CD14-positive monocyte (primary cell): ENCODE measurements at regions of chr4 and their contacts with region 1.

Region 1: DNA sequence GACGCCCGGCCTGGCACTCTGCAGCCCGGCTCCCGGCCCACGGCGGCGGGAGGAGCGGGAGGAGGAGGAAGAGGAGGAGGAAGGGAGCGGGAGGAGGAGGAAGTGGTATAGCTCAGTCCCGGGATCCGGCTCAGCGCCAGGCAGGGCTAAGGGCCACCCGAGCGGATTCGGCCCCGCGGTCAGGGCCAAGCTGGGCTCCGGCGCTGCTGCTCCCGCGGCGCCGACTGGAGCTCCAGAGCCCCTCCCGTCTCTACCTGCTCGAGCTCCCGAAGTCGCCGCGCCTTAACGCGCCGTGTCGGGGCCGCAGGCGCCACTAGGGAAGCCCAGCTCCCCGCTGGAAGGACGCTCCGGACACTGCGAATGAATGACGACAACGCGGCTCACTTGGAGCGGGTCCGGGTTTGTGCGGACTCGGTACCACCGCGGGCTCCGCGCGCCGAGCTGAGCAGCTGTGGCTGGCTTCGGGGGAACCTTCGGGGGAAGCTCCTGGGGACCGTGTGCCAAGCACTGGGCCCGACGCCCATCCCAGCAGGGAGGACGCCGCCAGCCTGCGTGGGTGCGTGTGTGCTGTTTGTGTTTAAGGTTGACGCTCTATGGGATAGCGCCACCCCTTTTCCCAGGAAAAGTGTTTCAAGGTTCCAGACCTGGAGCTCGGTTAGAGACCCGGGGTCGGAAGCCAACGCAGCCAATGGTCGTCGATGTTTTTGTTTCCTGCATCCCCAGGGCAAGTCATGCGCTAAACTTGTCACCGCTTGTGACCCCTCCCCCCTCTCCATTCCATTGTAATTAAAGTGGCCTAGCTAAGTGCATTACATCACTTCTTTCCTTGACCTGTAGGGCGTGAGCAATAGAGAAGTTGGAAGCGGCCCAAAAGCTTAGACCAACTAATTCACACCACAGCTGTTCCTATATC is at the start of gene TBC1D9:
- DNase-seq: peak; percentile 96 to 97 (median 96)
- H3K4me3 ChIP-seq: peak within 1 kb of the TSS; percentile 75 to 85 (median 79)
- H3K4me3 Mint-ChIP-seq: peak within 1 kb of the TSS; percentile 84 to 94
- H3K27ac ChIP-seq: peak within 1 kb of the TSS; percentile 95 to 98
- H3K27ac Mint-ChIP-seq: peak within 1 kb of the TSS; percentile 94 to 98 (median 97)
- H3K4me1 ChIP-seq: peaks cover 36 to 47% of the 10 kb centered on the region in 2 donors
- H3K4me1 Mint-ChIP-seq: peaks cover 42% of the 10 kb centered on the region
- H3K27me3 ChIP-seq: peaks cover 2 to 9% of the 10 kb centered on the region in 2 donors
- H3K27me3 Mint-ChIP-seq: peaks cover 12 to 20% (median 15%) of the 10 kb centered on the region in 3 donors
- CTCF ChIP-seq: no peak
- polyA plus RNA-seq, gene TBC1D9: 13.6 to 33.5 (median 21.0) TPM

Region 2: DNA sequence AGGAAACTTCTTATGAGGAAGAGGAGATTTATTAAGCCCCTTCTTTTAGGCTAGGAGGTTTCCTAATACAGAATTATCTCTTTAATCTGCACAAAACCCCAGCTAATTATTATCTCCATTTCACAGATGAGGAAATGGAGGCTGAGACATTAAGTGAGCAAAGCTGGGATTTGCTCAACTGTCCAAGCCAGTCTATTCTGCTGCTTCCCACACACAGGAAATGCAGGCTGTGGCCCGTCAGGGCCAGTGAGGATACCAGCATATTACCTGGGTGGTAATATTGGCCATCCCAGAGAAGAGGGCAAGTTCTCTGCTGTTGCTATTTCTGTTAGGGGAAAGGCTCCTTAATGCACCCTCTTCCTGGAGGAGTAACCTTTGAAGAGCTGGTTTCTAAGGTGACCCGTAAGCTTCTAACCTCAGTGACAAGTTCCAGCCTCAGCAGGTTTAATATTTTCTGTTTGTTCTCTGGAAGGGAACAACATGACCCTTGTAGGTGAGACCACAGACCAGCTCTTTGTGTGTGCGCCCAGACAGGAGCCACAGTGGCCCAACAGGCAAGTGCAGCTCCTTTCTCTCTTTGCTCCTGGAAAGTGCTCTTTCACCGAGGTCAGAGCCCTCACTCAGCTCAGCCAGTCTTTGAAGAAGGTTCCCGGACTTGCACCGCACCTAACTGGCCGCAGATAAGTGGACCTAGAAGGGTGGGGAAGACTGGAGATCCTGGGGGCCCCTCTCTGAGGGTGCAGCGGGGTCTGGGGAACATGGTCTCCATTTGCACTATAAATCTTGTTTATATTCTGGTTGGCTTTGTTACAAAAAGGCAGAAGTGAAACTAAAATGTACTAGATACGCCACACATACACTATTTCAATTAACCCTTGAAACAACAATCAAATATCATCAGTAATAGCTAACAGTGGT is 35.9 kb before region 1 on chr4:
- intact Hi-C with region 1: loop called in 1 of 2 experiments (anchors 5 kb)
- DNase-seq: peak in 2 of 3 donors; percentile 27 to 42
- H3K4me3 ChIP-seq: peak overlapping the region; percentile 9 to 69 (median 23)
- H3K4me3 Mint-ChIP-seq: peak overlapping the region; percentile 70 to 86
- H3K27ac ChIP-seq: peak overlapping the region; percentile 93 to 97
- H3K27ac Mint-ChIP-seq: peak overlapping the region; percentile 95 to 99 (median 97)
- H3K4me1 ChIP-seq: peaks cover 55 to 73% of the 10 kb centered on the region in 2 donors
- H3K4me1 Mint-ChIP-seq: peaks cover 70% of the 10 kb centered on the region
- H3K27me3 ChIP-seq: no peaks in the 10 kb centered on the region
- H3K27me3 Mint-ChIP-seq: no peaks in the 10 kb centered on the region
- CTCF ChIP-seq: no peak

Region 3: GRCh38 chr4:140743194-140743931 is 13.2 kb before region 1 on chr4:
- intact Hi-C with region 1: loop called in 1 of 2 experiments (anchors 2 kb)
- DNase-seq: peak; percentile 63 to 79 (median 71)
- H3K4me3 ChIP-seq: peak overlapping the region in 1 of 3 experiments; percentile 34
- H3K4me3 Mint-ChIP-seq: peak overlapping the region in 1 of 2 donors; percentile 83
- H3K27ac ChIP-seq: peak overlapping the region; percentile 5 to 84
- H3K27ac Mint-ChIP-seq: peak overlapping the region; percentile 85 to 97 (median 96)
- H3K4me1 ChIP-seq: peaks cover 20 to 25% of the 10 kb centered on the region in 2 donors
- H3K4me1 Mint-ChIP-seq: peaks cover 33% of the 10 kb centered on the region
- H3K27me3 ChIP-seq: no peaks in the 10 kb centered on the region
- H3K27me3 Mint-ChIP-seq: peaks cover 4 to 5% (median 5%) of the 10 kb centered on the region in 3 donors
- CTCF ChIP-seq: peak; percentile 32

Region 4: GRCh38 chr4:140790765-140791164 is 34.2 kb after region 1 on chr4:
- intact Hi-C with region 1: loop called in 1 of 2 experiments (anchors 5 kb)
- DNase-seq: peak; percentile 93 to 95 (median 95)
- H3K4me3 ChIP-seq: peak overlapping the region in 1 of 3 experiments; percentile 42
- H3K4me3 Mint-ChIP-seq: peak overlapping the region in 1 of 2 donors; percentile 16
- H3K27ac ChIP-seq: peak overlapping the region; percentile 97 to 98
- H3K27ac Mint-ChIP-seq: peak overlapping the region; percentile 91 to 99 (median 97)
- H3K4me1 ChIP-seq: peaks cover 38 to 43% of the 10 kb centered on the region in 2 donors
- H3K4me1 Mint-ChIP-seq: peaks cover 48% of the 10 kb centered on the region
- H3K27me3 ChIP-seq: no peaks in the 10 kb centered on the region
- H3K27me3 Mint-ChIP-seq: peaks cover 0 to 3% (median 0%) of the 10 kb centered on the region in 3 donors
- CTCF ChIP-seq: no peak

Region 5: GRCh38 chr4:140807491-140808252 is 51.1 kb after region 1 on chr4:
- intact Hi-C with region 1: loop called in 1 of 2 experiments (anchors 10 kb)
- DNase-seq: peak; percentile 47 to 81 (median 56)
- H3K4me3 ChIP-seq: peak overlapping the region in 1 of 3 experiments; percentile 51
- H3K4me3 Mint-ChIP-seq: peak overlapping the region in 1 of 2 donors; percentile 70
- H3K27ac ChIP-seq: peak overlapping the region; percentile 61 to 84
- H3K27ac Mint-ChIP-seq: peak overlapping the region; percentile 82 to 92 (median 90)
- H3K4me1 ChIP-seq: peaks cover 53 to 61% of the 10 kb centered on the region in 2 donors
- H3K4me1 Mint-ChIP-seq: peaks cover 60% of the 10 kb centered on the region
- H3K27me3 ChIP-seq: no peaks in the 10 kb centered on the region
- H3K27me3 Mint-ChIP-seq: peaks cover 0 to 8% (median 1%) of the 10 kb centered on the region in 3 donors
- CTCF ChIP-seq: no peak